Activated T-helper 1 cell treated with anti-CD3 and anti-CD28 coated beads, Interleukin-12 subunit alpha, Interleukin-12 subunit beta, Interleukin-2, Interleukin-4 antibody, amounts not matched to agents 30 ng/mL and 10 ng/mL and 1 ng/mL, durations not matched to agents 14 hours and 24 hours and 36 hours (primary cell): ENCODE measurements at regions of chr20 and their contacts with region 1.

Region 1: GRCh38 chr20:543369-544152 is at the start of gene CSNK2A1:
- DNase-seq: peak; percentile 94
- H3K4me3 Mint-ChIP-seq: peak within 1 kb of the TSS; percentile 91
- H3K27ac Mint-ChIP-seq: peak within 1 kb of the TSS; percentile 91
- H3K4me1 Mint-ChIP-seq: peaks cover 47% of the 10 kb centered on the region
- H3K27me3 Mint-ChIP-seq: peaks cover 3% of the 10 kb centered on the region
- total RNA-seq, gene CSNK2A1: 181 and 185 TPM in 2 replicates

Region 2: GRCh38 chr20:266596-267562 is 276.7 kb before region 1 on chr20:
- intact Hi-C with region 1: no loop called
- DNase-seq: peak; percentile 78
- H3K4me3 Mint-ChIP-seq: peak overlapping the region; percentile 76
- H3K27ac Mint-ChIP-seq: peak overlapping the region; percentile 68
- H3K4me1 Mint-ChIP-seq: peaks cover 11% of the 10 kb centered on the region
- H3K27me3 Mint-ChIP-seq: peaks cover 19% of the 10 kb centered on the region

Region 3: GRCh38 chr20:347640-348484 is 195.7 kb before region 1 on chr20:
- intact Hi-C with region 1: loop called (anchors 2 kb)
- DNase-seq: peak; percentile 56
- H3K4me3 Mint-ChIP-seq: peak overlapping the region; percentile 92
- H3K27ac Mint-ChIP-seq: peak overlapping the region; percentile 79
- H3K4me1 Mint-ChIP-seq: peaks cover 25% of the 10 kb centered on the region
- H3K27me3 Mint-ChIP-seq: peaks cover 4% of the 10 kb centered on the region

Region 4: DNA sequence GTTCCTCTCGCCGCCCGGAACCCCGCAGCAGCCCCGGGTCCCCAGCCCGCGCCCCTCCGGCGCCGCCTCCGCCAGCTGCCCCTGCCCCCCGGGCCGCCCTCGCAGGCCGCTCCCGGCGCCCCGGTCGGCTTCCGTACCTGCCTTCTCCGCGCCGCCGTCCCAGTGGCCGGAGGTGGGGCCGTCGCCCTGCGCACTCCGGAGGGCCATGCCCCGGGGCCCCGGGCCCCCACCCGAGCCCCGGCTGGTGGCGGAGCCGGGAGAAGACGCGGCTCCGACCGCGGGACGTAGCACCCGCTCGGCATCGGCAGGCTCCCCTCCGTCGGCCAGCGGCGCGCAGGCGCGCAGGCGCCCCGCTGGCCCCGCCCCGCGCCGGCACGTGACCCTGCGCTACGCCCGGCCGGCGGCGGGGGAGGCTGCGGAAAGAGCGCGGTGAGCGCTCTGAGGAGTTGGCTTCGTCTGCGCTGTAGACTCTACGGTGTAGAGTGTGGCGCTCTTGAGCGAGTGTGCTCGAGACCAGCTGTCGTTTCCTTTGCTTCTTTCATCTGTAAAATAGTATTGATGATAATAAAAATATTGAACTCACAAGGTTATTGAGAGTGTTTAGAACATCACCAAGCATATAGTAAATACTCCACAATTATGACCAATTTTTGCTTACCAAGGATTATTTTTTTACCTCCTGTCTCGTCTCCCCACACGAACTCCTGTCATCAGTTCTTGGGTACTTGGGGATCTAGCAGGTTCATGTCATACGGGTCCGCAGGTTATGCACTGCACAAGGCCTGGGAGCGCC is 81.2 kb before region 1 on chr20 and contains the start of gene TBC1D20:
- intact Hi-C with region 1: loop called (anchors 1 kb)
- DNase-seq: peak; percentile 84
- H3K4me3 Mint-ChIP-seq: peak within 1 kb of the TSS; percentile 98
- H3K27ac Mint-ChIP-seq: peak within 1 kb of the TSS; percentile 94
- H3K4me1 Mint-ChIP-seq: peaks cover 44% of the 10 kb centered on the region
- H3K27me3 Mint-ChIP-seq: peaks cover 2% of the 10 kb centered on the region
- total RNA-seq, gene TBC1D20: 37.5 and 41.4 TPM in 2 replicates

Region 5: GRCh38 chr20:577167-577791 is 33.7 kb after region 1 on chr20:
- intact Hi-C with region 1: no loop called
- DNase-seq: no peak
- H3K4me3 Mint-ChIP-seq: no peak overlapping the region
- H3K27ac Mint-ChIP-seq: no peak overlapping the region
- H3K4me1 Mint-ChIP-seq: no peaks in the 10 kb centered on the region
- H3K27me3 Mint-ChIP-seq: peaks cover 19% of the 10 kb centered on the region

Region 6: GRCh38 chr20:653110-653589 is 109.6 kb after region 1 on chr20 and contains the start of gene SRXN1:
- intact Hi-C with region 1: loop called (anchors 1 kb)
- DNase-seq: peak; percentile 80
- H3K4me3 Mint-ChIP-seq: peak within 1 kb of the TSS; percentile 87
- H3K27ac Mint-ChIP-seq: peak within 1 kb of the TSS; percentile 81
- H3K4me1 Mint-ChIP-seq: peaks cover 35% of the 10 kb centered on the region
- H3K27me3 Mint-ChIP-seq: peaks cover 16% of the 10 kb centered on the region
- total RNA-seq, gene SRXN1: 28.8 and 30.2 TPM in 2 replicates